ENCODE measurements at regions of chr11 and their contacts with region 1.

Region 1: DNA sequence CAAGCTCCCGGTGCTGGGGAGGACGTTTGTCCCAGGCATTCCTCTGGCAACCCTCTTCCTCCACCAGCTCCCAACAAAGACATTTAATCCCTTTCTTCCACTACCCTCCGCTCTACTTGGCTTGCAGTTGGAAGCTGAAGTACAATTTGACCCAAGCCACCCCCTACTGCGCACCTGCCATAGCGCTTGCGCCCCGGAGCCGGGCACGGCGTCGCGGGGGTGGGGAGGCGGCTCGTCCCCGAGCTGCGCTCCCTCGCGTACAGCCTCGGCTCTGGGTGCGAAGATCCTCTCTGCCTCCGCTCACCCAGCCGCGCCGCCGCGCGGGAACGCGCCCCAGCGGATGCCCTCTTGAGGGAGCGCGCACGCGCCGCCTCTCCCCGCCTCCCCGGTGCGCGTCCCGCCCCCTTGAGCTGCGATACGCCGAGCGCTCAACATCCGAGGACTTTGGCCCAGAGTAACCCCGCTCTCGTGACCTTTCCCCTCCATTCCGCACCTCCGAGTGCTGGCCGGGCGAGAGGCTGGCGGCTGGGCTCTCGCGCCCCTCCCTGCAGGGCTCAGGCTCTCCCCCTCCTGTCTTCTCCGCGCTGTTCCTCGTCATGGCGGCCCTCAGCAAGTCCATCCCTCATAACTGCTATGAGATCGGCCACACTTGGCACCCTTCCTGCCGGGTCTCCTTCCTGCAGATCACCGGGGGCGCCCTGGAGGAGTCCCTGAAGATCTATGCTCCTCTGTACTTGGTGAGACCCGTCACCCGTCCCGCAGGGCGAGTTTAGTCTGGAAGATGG is at the start of gene TMEM135:
- DNase-seq: peak; percentile 95 to 96
- ATAC-seq: peak; percentile 98 to 100 (median 99)
- H3K4me3 ChIP-seq: peak within 1 kb of the TSS; percentile 54 to 93 (median 84)
- H3K27ac ChIP-seq: peak within 1 kb of the TSS; percentile 70 to 92 (median 90)
- H3K4me1 ChIP-seq: peaks cover 2 to 43% (median 29%) of the 10 kb centered on the region in 9 donors
- H3K27me3 ChIP-seq: no peaks in the 10 kb centered on the region
- CTCF ChIP-seq: peak in 4 of 9 donors; percentile 16 to 38 (median 30)
- total RNA-seq, gene TMEM135: 12.0 to 28.6 (median 17.5) TPM

Region 2: GRCh38 chr11:86537541-86538222 is 500.0 kb before region 1 on chr11:
- intact Hi-C with region 1: no loop called
- DNase-seq: no peak
- ATAC-seq: peak in 1 of 8 donors; percentile 39
- H3K4me3 ChIP-seq: no peak overlapping the region
- H3K27ac ChIP-seq: no peak overlapping the region
- H3K4me1 ChIP-seq: no peaks in the 10 kb centered on the region
- H3K27me3 ChIP-seq: no peaks in the 10 kb centered on the region
- CTCF ChIP-seq: peak in 5 of 9 donors; percentile 11 to 50 (median 17)

Region 3: GRCh38 chr11:86955361-86956120 is 82.1 kb before region 1 on chr11 and contains the start of gene FZD4:
- intact Hi-C with region 1: loop called in 7 of 10 experiments (anchors 2 to 10 kb)
- DNase-seq: peak; percentile 92 to 94
- ATAC-seq: peak; percentile 89 to 97 (median 92)
- H3K4me3 ChIP-seq: peak within 1 kb of the TSS; percentile 84 to 100 (median 98)
- H3K27ac ChIP-seq: peak within 1 kb of the TSS; percentile 86 to 100 (median 98)
- H3K4me1 ChIP-seq: peaks cover 2 to 59% (median 43%) of the 10 kb centered on the region in 9 donors
- H3K27me3 ChIP-seq: peaks cover 0 to 36% (median 0%) of the 10 kb centered on the region in 7 donors
- CTCF ChIP-seq: peak in 8 of 9 donors; percentile 36 to 73 (median 44)
- total RNA-seq, gene FZD4: 17.8 to 34.6 (median 23.7) TPM

Region 4: DNA sequence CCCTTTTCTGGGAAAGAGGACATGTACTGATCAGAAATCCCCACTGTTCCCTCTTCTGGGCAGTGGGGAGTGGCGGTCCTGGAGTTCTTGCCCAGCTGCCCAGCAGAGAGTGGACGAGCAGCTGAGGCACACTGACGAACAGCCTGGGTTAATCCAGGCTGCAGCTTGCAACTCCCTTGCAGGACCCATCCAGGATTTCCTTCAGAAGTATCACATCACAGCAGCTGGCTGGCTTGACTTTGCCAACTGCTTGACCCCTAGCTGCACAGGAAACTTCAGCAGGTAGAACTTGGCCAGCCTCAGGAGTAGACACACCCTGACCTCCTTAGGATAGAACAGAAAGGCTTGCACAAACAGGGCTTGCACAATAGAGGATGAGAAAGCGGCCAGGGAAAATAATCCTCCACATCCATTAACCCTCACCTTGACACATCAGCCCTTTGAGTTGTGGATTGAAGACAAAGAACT is 54.6 kb before region 1 on chr11:
- intact Hi-C with region 1: loop called in 1 of 10 experiments (anchors 10 kb)
- DNase-seq: peak in 1 of 2 donors; percentile 26
- ATAC-seq: peak; percentile 35 to 84 (median 58)
- H3K4me3 ChIP-seq: no peak overlapping the region
- H3K27ac ChIP-seq: peak overlapping the region in 1 of 10 donors; percentile 61
- H3K4me1 ChIP-seq: peaks cover 10 to 64% (median 27%) of the 10 kb centered on the region in 9 donors
- H3K27me3 ChIP-seq: no peaks in the 10 kb centered on the region
- CTCF ChIP-seq: no peak

Region 5: DNA sequence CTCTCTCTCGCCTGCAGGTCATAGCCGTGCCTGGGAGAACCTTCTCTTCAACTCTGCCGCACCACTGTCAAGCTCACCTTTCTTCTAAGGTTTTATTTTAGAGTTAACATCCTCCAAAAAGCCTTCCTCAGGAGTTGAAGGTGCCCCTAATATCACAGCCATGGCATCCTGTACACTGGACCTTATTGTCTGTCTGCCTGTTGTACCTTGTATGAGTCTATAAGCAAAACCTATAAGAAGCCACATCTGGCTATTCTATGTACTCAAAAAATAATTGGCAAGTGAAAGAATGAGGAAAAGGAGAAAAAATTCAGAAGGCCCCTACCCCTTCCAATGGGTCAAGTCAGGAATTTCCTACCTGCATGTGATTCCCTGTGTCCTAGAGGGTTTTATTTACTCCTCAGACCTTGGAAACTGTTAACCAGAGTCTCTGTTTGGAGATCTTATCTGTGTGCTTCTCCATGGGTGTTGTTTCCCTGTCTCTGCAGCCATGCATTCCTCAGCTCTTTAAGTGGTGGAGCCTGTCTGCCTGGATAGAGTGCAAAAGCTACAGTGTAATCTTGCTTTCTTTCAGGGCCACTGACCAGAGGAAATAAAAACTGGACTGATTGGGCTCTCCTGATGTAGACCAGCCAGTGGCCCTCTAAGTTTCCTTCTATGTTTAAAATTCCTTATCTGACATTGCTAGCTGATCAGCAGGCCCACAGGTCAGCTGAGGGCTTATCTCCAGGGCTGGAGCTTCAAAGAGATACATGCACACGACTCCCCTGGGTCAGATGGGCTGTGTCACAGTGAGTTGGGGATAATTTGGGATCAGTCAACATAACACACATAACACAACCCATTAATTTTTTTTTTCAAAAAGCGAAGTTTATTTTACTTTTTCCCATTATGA is 37.5 kb before region 1 on chr11:
- intact Hi-C with region 1: loop called in 1 of 10 experiments (anchors 5 kb)
- DNase-seq: peak in 1 of 2 donors; percentile 17
- ATAC-seq: peak; percentile 38 to 85 (median 76)
- H3K4me3 ChIP-seq: no peak overlapping the region
- H3K27ac ChIP-seq: peak overlapping the region in 6 of 10 donors; percentile 15 to 56 (median 32)
- H3K4me1 ChIP-seq: peaks cover 0 to 19% (median 11%) of the 10 kb centered on the region in 9 donors
- H3K27me3 ChIP-seq: no peaks in the 10 kb centered on the region
- CTCF ChIP-seq: no peak

Region 6: GRCh38 chr11:87097582-87097981 is 59.9 kb after region 1 on chr11:
- intact Hi-C with region 1: loop called in 1 of 10 experiments (anchors 2 kb)
- DNase-seq: peak in 1 of 2 donors; percentile 28
- ATAC-seq: peak in 7 of 8 donors; percentile 16 to 79 (median 64)
- H3K4me3 ChIP-seq: no peak overlapping the region
- H3K27ac ChIP-seq: no peak overlapping the region
- H3K4me1 ChIP-seq: peaks cover 0 to 9% (median 0%) of the 10 kb centered on the region in 9 donors
- H3K27me3 ChIP-seq: no peaks in the 10 kb centered on the region
- CTCF ChIP-seq: peak; percentile 26 to 78 (median 68)

Measured in heart right ventricle (tissue), 16 donors.